Right cardiac atrium (tissue), 5 donors: ENCODE measurements at regions of chr1 and their contacts with region 1.

Region 1: DNA sequence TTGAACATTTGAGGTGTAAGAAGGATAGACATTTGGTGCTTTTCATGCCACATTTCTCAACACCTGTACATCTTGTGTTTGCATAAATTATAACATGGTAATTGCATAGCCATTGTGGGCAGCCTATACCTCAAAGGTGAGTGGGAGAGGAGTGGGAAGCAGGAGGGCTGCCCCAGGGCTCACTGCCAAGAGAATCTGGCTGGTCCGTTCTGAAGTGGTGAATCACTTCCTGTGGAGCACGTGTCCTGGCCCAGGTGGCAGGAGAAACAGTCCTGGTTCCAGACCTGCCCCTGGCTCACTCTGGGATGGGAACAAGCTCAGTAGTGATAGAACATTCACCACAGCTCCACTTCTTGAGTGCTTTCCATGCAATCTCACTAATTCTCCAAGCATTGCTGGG is 11.6 kb upstream of the OLFML2B start:
- DNase-seq: peak in 1 of 3 donors; percentile 50
- ATAC-seq: no peak
- H3K4me3 ChIP-seq: no peak overlapping the region
- H3K27ac ChIP-seq: no peak overlapping the region
- H3K4me1 ChIP-seq: no peaks in the 10 kb centered on the region
- H3K27me3 ChIP-seq: no peaks in the 10 kb centered on the region

Region 2: DNA sequence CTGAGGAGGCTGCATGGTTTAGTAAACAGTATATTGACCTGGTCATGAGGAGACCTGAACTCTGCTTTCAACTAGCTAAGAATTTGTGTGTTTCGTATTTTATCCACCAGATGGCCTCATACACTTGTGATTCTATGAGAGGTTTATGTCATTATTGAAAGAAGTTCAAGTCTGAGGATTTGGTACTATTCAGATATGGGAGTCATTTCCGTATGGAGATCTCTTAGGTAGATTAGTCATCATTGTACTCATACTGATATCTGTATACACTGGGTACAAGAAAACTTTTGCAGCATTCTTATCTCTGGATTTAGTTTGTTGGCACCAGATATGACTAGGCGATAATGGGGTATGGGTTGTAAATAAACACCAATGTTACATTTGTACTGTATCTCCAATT is 242.5 kb before region 1 on chr1:
- intact Hi-C with region 1: loop called (anchors 5 kb)
- DNase-seq: no peak
- ATAC-seq: peak; percentile 52 to 55
- H3K4me3 ChIP-seq: no peak overlapping the region
- H3K27ac ChIP-seq: no peak overlapping the region
- H3K4me1 ChIP-seq: no peaks in the 10 kb centered on the region
- H3K27me3 ChIP-seq: no peaks in the 10 kb centered on the region

Region 3: DNA sequence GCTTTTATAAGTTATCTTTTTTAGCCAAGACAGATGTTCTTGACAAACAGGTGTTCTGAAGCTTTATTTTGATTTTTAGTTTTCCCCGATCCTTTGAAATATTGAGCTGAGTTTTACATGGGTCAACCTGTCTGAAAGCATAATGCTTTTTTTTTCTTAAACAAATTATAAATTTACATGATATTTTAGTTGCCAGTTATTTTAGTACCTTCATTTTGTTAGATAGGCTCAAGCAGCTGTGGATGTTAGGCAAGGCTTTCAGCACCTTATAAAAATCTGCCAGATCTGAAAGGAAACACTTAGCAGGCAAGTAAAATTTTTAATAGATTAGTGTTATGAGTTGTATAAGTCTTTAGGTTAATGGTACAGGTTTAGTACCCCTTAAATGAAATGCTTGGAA is 235.4 kb before region 1 on chr1:
- intact Hi-C with region 1: loop called (anchors 5 kb)
- DNase-seq: no peak
- ATAC-seq: no peak
- H3K4me3 ChIP-seq: no peak overlapping the region
- H3K27ac ChIP-seq: no peak overlapping the region
- H3K4me1 ChIP-seq: no peaks in the 10 kb centered on the region
- H3K27me3 ChIP-seq: no peaks in the 10 kb centered on the region

Region 4: GRCh38 chr1:161864577-161864976 is 170.7 kb before region 1 on chr1:
- intact Hi-C with region 1: loop called in 2 of 4 experiments (anchors 5 kb)
- DNase-seq: peak in 1 of 3 donors; percentile 39
- ATAC-seq: peak in 1 of 2 donors; percentile 64
- H3K4me3 ChIP-seq: no peak overlapping the region
- H3K27ac ChIP-seq: no peak overlapping the region
- H3K4me1 ChIP-seq: no peaks in the 10 kb centered on the region
- H3K27me3 ChIP-seq: no peaks in the 10 kb centered on the region